Motor neuron (in vitro differentiated cells): ENCODE measurements at regions of chr1 and their contacts with region 1.

Region 1: GRCh38 chr1:33256701-33257399 is 558 bp downstream of the ZNF362 start:
- ATAC-seq: peak; percentile 58 to 78 (median 72)
- H3K4me3 ChIP-seq: peak overlapping the region; percentile 52 to 90 (median 89)
- H3K27ac ChIP-seq: peak overlapping the region; percentile 74 to 84
- H3K4me1 ChIP-seq: peaks cover 26 to 28% of the 10 kb centered on the region in 2 donors

Region 2: DNA sequence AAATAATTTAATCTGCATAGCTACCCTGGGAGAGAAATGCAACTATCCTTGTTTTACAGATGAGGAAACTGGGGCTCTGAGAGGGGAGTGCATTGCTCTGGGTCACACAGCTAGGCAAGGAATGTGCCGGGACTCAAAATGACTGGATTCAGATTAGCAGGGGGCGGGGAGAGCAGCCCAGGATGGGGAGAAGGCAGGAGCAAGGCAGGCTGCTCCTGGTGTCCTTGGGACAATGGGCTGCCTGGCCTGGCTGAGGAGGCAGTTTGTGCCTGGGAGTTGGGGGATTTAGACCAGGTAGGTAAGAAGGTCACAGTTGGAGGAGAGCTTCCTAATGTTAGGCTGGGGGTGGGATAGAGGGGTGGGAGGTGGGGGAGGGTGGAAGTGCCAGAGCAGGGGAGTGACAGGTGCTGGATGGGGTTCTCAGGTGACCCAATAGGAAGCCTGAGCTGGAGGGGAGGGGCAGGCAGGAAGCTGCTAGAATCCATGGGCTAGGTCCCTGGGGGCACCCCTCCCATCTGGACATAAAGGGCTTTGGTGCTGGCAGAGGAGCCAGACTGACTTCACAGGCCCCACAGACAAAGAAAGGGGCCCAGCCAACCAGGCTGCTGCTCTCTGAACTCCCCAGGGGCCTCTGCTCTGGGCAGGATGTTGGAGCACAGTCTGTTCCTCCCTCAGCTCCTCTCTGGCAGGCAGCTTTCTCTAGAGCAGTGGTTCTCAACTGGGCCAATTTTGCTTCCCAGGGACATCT is 104.0 kb before region 1 on chr1:
- in situ Hi-C with region 1: loop called in 1 of 9 experiments (anchors 25 kb)
- ATAC-seq: peak; percentile 44 to 96 (median 91)
- H3K4me3 ChIP-seq: no peak overlapping the region
- H3K27ac ChIP-seq: peak overlapping the region; percentile 22 to 47
- H3K4me1 ChIP-seq: peaks cover 23 to 25% of the 10 kb centered on the region in 2 donors